Astrocyte of the cerebellum (primary cell): ENCODE measurements at regions of chr3 and their contacts with region 1.

Region 1: DNA sequence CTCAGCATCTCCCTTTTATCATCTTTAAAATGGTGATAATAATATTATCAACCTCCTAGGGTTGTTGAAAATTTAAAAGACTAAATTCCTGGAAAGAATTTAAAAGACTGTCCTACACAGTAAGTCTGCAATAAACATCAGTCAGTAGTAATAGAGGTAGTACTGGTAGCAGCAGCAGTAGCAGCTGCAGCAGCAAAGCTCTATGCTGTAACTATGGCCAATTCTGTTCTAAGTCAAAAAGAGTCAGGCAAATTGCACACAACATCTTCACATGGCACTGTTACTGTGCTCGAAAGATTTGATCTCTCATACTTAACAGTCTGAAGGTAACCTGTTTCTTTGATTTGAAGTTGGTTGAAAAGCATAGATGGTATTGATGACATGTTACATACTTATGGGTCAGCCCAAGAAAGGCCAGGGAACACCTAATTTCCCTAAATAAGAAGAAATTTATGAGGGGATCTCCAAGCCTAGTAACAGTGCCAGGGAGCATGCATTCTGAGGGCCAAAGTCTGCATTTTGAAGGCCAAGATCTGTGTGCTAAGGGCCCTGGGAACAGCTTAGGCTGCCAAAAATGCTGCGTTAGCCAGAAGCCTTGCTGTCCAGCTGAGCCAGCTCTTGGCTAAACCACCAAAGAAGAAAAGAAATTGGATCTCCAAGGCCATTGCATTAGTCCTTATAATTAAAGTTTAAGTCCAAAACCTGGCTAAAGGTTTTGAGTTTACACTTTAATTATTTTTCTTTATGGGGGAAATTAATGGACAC is 68.2 kb downstream of the SIDT1 start:
- DNase-seq: no peak
- H3K4me3 ChIP-seq: no peak overlapping the region
- CTCF ChIP-seq: no peak

Region 2: DNA sequence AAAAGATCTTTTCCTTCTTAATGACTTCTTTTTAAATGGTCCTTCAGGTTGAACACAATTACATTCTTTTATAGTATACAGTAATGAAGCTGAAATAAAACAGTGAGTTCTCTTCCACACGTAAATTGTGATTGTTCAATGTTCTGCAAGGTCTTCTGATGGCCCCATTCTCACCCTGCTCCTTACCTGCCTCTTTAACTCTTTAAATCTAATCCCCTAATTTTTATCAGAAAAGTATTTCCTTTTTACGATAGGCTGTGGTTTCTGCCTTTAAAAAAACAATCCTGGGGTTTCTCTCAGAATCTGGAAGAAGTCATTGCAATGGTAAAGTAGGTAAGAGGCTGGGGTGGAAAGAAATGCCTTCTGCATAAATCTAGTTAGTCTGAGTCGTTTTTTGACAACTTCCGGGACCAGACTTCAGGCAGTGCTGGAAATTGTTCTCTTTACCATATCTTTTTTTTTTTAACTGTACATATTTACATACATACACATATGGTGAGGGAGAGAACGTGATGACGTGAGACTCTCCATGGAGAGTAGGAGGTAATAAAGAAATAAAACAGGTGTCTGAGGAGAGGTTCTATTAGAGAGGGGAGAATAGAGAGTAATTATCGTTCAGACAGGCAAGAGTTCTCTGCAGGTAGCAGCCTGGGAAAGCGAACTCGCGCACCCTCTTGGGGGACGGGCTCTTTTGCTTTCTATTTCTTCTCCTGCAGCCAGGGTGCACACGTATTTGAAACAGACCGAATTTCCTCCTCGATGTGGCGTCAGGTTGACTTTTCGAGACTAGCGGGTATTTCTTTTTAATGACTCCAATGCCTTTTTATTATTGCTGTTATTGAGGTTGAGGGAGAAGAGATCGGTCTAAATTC is 68.5 kb before region 1 on chr3 and contains the start of gene SIDT1:
- in situ Hi-C with region 1: loop called (anchors 5 kb)
- DNase-seq: no peak
- H3K4me3 ChIP-seq: peak within 1 kb of the TSS; percentile 50
- CTCF ChIP-seq: peak; percentile 22

Region 3: DNA sequence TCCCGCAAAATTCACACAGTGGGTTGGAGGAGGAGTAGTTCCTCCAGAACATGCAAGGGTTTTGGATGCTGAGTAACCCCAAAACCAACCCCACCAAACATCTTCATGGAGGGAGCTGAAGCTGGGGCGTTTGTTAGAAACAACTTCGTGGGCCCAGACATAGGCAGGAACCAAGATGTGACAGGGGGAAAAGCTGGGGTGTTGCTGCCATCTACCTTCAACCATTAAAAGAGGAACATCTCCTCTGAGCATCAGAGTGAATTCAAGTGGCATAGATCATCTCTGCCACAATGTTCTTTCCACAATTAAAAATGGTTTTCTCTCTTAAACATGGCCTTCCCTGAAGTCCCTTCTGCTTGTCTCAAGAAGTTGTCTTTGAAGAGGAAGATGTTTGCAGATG is 47.7 kb before region 1 on chr3:
- in situ Hi-C with region 1: no loop called
- DNase-seq: no peak
- H3K4me3 ChIP-seq: no peak overlapping the region
- CTCF ChIP-seq: no peak